Ascending aorta (tissue), 2 donors: ENCODE measurements at regions of chr19 and their contacts with region 1.

Region 1: DNA sequence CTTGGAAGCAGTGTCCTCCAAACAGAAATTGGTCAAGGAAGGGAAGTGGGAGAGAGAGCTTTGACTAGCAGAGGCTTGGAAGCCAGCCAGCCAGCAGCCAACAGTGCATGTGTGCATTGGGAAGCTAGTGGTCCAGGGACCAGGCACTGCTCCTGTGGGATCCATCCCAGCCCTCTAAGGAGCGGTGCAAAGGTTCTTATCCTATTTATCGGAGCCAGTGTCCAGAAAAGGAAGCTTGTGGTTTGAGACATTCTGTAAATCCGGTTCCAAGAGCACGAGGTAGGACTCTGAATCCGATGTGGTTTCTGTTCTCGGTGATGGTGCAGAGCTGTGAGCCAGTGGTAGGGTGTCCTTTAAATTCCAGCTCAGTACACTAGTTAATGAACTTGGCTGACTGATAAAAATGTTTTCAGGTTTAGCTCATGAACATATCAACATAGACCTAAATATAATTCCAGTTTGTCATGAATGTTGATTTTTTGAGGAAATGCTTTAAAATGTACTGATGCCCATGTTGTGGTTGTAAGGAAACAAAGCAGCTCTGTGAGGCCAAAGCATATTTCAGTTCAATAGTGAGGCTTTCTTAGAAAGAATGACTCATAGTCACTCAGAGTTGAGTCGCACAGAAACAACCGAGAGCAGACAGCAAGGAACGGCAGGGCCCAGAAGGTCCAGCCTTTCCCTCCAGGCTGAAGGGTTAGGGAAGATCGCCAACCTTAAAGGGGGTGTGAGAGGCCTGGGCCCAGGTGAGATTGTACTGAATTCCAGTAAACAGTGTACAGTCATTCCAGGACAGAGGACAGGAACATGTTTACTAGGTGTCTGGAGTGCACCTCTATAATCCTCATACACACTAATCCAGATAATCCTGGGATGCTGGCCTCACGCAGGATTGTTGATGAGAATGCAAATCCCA is 21.5 kb upstream of the GARRE1 start:
- DNase-seq: peak in 1 of 2 donors; percentile 77
- H3K4me3 ChIP-seq: peak overlapping the region in 1 of 2 donors; percentile 36
- H3K27ac ChIP-seq: peak overlapping the region; percentile 79 to 82
- H3K4me1 ChIP-seq: peaks cover 0 to 27% of the 10 kb centered on the region in 2 donors
- H3K27me3 ChIP-seq: no peaks in the 10 kb centered on the region
- CTCF ChIP-seq: no peak

Region 2: DNA sequence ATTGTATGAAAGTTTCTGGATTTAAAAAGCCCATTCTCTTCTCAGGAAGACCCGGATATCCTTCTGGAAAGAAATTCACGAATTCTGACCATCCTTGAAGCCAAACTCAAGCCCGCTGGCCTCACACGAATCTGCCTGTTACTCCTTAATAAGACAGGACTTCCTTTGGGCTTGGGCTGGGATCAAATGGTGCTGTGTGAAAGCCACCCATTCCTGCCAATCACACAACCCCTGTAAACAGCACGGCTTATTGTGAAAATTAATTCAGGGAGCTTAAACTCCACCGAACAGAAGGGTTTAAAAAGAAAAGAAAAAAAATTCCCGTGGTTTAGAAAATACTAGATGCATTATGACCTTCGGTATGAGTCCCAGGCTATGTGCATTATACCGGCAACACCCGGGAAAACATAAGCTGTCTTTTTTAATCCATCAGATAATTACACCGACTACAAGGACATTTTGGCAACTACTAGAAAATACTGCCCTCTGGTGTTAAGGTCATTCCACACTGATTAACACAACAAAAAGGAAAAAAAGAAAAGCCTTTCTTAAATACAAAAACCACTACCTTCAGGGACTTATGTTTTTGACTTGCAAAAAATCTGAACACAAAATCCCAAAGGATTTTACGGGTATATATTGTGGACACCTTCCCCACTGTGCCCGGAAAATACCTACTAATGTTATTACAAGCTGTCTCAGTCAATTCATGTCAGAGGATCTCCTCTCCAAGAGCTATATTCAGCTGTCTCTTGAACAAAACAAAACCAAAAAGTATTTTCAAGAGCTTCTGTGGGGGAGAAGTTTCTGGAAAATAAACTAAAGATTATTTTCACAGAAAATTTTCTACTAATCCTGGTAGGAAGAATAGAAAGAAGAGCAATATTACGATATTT is 136.6 kb before region 1 on chr19:
- intact Hi-C with region 1: no loop called
- DNase-seq: no peak
- H3K4me3 ChIP-seq: no peak overlapping the region
- H3K27ac ChIP-seq: no peak overlapping the region
- H3K4me1 ChIP-seq: no peaks in the 10 kb centered on the region
- H3K27me3 ChIP-seq: no peaks in the 10 kb centered on the region
- CTCF ChIP-seq: peak in 2 of 3 experiments; percentile 33 to 47

Region 3: DNA sequence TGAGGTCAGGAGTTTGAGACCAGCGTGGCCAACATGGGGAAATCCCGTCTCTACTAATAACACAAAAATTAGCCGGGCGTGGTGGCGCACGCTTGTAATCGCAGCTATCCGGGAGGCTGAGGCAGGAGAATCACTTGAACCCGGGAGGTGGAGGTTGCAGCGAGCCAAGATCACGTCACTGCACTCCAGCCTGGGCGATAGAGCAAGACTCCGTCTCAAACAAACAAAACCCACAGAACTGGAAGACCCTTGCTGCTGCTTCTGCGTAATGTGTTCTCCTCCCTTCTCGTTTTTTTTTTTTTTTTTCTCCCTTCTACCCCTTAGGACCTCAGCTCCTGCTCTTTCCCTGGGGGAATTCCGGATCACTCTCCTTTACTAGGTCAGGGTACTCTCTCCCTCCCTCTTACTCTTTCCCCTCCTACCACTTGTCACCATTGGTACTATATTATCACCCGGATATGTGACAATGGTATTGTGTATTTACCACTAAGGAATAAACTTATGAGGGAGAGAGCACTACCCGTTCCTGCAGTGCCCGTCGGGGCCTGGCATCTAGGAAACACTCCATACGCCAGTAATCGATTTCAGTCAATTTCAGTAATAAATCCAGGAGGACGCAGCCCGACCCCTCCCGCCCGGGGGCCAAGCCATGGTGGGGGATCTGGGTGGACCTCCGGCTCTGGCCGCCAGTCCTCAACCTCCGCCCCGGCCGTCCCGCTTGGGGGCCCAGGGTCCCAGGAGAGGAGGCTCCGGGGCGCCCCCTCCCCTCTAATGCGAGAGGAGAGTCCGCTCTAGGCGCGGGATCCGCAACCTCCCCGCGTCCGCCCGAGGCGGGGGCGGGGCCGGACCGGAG is 21.1 kb after region 1 on chr19:
- intact Hi-C with region 1: loop called (anchors 2 kb)
- DNase-seq: peak; percentile 34 to 90
- H3K4me3 ChIP-seq: peak overlapping the region; percentile 81 to 83
- H3K27ac ChIP-seq: peak overlapping the region; percentile 95 to 98
- H3K4me1 ChIP-seq: peaks cover 0 to 18% of the 10 kb centered on the region in 2 donors
- H3K27me3 ChIP-seq: no peaks in the 10 kb centered on the region
- CTCF ChIP-seq: no peak

Region 4: GRCh38 chr19:34336781-34337271 is 104.0 kb after region 1 on chr19:
- intact Hi-C with region 1: loop called (anchors 5 kb)
- DNase-seq: peak in 1 of 2 donors; percentile 12
- H3K4me3 ChIP-seq: no peak overlapping the region
- H3K27ac ChIP-seq: peak overlapping the region; percentile 50 to 56
- H3K4me1 ChIP-seq: peaks cover 0 to 8% of the 10 kb centered on the region in 2 donors
- H3K27me3 ChIP-seq: no peaks in the 10 kb centered on the region
- CTCF ChIP-seq: peak; percentile 51 to 64 (median 60)